H1 (cell line): ENCODE measurements at regions of chr1 and their contacts with region 1.

Region 1: GRCh38 chr1:230696722-230697437 is 17.0 kb downstream of the AGT start:
- DNase-seq: no peak
- H3K4me3 ChIP-seq: no peak overlapping the region
- H3K27ac ChIP-seq: no peak overlapping the region
- H3K4me1 ChIP-seq: peaks cover 0 to 8% (median 1%) of the 10 kb centered on the region in 4 experiments; a peak in 1 of 7 replicates
- H3K27me3 ChIP-seq: no peaks in the 10 kb centered on the region
- CTCF ChIP-seq: 0 out of 4 replicates have a peak, but pooled peaks of 1 of the 3 experiments have one; percentile 7
- EP300 ChIP-seq: no peak
- POLR2A ChIP-seq: no peak
- RAD21 ChIP-seq: peak; percentile 25 to 30; a peak in 2 of 4 replicates

Region 2: DNA sequence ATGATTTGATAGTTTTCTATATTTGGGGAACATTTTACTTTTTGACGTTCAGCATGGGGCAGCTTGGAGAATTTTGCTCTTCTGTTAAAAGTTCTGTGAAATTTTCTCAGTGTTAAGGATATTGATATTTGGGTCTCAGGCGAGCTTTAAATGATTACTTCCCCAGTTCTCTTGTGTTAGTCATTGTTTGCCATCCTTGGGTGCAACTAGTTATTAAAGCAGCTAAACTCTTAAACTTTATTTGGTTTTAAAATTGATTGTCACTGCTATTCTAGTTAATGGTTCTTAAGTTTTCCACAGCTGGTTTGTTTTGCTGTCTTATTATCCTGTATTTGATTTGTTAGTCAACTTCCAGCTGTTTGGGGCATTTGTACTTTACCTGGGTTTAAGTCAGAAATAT is 45.6 kb before region 1 on chr1:
- CTCF ChIA-PET with region 1: no interaction called
- POLR2A ChIA-PET with region 1: no interaction called
- DNase-seq: no peak
- H3K4me3 ChIP-seq: no peak overlapping the region
- H3K27ac ChIP-seq: no peak overlapping the region
- H3K4me1 ChIP-seq: no peaks in the 10 kb centered on the region
- H3K27me3 ChIP-seq: no peaks in the 10 kb centered on the region
- CTCF ChIP-seq: no peak
- EP300 ChIP-seq: no peak
- POLR2A ChIP-seq: no peak
- RAD21 ChIP-seq: no peak

Region 3: GRCh38 chr1:230686747-230687146 is 10.1 kb before region 1 on chr1:
- CTCF ChIA-PET with region 1: interaction called, 11 read pairs
- POLR2A ChIA-PET with region 1: no interaction called
- DNase-seq: no peak
- H3K4me3 ChIP-seq: no peak overlapping the region
- H3K27ac ChIP-seq: no peak overlapping the region
- H3K4me1 ChIP-seq: no peaks in the 10 kb centered on the region
- H3K27me3 ChIP-seq: no peaks in the 10 kb centered on the region
- CTCF ChIP-seq: no peak
- EP300 ChIP-seq: no peak
- POLR2A ChIP-seq: no peak
- RAD21 ChIP-seq: no peak

Region 4: DNA sequence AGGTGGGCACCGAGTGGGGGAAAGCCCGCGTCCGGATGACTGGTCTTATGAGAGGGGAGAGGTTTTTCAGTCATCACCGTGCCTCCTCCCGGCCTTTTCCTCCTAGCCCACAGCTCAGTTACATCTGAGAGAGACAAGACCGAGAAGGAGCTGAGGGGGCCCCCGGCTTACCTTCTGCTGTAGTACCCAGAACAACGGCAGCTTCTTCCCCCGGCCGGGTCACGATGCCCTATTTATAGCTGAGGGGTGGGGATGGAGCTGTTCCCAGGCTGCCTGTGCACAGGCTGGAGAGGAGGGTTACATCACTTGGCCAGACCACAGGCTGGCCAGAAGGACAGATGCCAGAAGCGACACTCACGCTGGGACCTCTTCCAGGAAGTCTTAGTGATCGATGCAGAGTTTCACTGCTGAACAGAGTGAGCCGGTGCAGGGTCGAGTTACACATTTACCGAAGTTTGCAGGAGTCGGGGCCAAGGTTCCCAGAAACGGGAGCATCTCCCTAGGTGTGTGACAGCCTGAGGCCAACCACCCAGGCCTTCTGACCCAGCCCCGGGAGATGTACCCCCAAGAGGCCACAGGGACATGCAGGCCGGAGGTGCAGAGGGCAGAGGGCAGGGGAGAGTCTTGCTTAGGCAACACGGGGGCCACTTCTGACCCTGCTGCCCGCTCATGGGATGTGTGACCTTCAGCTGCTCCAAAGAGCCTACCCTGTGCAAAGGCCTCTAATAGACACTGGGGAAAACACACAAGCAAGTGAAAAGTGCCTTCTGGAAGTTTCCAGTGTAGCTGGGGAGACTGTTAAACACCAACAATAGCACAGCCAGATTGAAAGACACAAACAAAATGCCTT is 17.3 kb after region 1 on chr1 and contains the start of gene AGT:
- CTCF ChIA-PET with region 1: interaction called, 12 read pairs
- POLR2A ChIA-PET with region 1: interaction called, 4 read pairs
- DNase-seq: no peak
- H3K4me3 ChIP-seq: no peak within 1 kb of the TSS
- H3K27ac ChIP-seq: no peak within 1 kb of the TSS
- H3K4me1 ChIP-seq: peaks cover 0 to 10% (median 4%) of the 10 kb centered on the region in 4 experiments; a peak in 4 of 7 replicates
- H3K27me3 ChIP-seq: no peaks in the 10 kb centered on the region; a peak in 1 of 7 replicates
- CTCF ChIP-seq: no peak
- EP300 ChIP-seq: no peak
- POLR2A ChIP-seq: no peak
- RAD21 ChIP-seq: no peak
- total RNA-seq, gene AGT: not detected in 2 replicates

Region 5: GRCh38 chr1:230858918-230859729 is 162.2 kb after region 1 on chr1:
- CTCF ChIA-PET with region 1: no interaction called
- POLR2A ChIA-PET with region 1: no interaction called
- DNase-seq: no peak
- H3K4me3 ChIP-seq: no peak overlapping the region
- H3K27ac ChIP-seq: no peak overlapping the region
- H3K4me1 ChIP-seq: peaks cover 2 to 13% (median 10%) of the 10 kb centered on the region in 4 experiments; a peak in 6 of 7 replicates
- H3K27me3 ChIP-seq: no peaks in the 10 kb centered on the region
- CTCF ChIP-seq: no peak
- EP300 ChIP-seq: no peak
- POLR2A ChIP-seq: no peak
- RAD21 ChIP-seq: no peak